ENCODE measurements at regions of chr11 and their contacts with region 1.

Region 1: GRCh38 chr11:416757-417621 is 2.2 kb upstream of the SIGIRR start:
- DNase-seq: no peak
- H3K4me3 ChIP-seq: peak overlapping the region; percentile 42 to 75 (median 65)
- H3K27ac ChIP-seq: peak overlapping the region; percentile 63 to 86
- H3K4me1 ChIP-seq: peaks cover 0 to 8% of the 10 kb centered on the region in 2 donors
- H3K27me3 ChIP-seq: peaks cover 0 to 3% of the 10 kb centered on the region in 2 donors
- CTCF ChIP-seq: no peak
- POLR2A ChIP-seq: no peak

Region 2: DNA sequence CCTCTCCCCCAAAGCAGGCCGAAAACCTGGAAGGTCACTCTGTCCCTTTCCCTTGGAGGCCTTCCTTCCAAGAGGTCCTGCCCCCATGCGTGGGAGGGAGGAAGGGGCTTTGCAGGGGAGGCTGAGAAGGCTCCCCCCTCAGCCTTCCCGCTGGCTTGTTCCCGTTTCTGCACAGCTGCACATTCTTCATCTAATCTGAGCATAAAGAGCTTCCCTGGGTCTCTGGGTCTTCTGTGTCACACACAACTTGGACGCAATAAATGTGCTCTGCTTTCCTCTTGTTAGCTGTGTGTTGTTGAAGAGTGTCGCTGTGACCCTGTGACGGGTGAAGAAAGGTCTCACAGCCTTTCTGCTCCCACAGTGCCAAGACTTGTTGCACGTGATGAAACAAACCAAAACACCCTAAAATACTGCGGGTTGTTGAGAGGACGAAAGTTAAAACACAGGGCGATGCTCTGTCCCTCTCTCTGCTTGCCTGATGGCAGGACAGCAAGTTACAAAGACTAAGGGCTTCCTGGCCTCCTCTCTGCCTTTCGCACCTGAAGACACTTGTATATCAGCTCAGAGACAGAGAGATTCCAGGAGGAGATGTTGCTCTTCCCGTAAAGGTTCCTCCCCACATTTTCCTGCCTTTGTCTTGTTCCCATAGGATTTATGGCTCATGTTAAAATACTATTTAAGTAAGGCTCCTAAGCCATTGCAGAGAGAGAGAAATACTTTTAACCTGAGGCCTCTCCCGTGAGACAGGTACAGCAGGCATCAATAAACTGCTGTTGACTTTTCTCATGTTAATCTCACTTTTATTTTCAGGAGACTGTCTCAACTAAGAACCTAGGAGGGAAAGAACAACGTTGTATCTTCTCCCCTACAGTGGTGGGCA is 81.0 kb before region 1 on chr11:
- intact Hi-C with region 1: loop called (anchors 2 kb)
- DNase-seq: peak in 1 of 2 donors; percentile 17
- H3K4me3 ChIP-seq: peak overlapping the region in 1 of 3 donors; percentile 19
- H3K27ac ChIP-seq: peak overlapping the region; percentile 76 to 79
- H3K4me1 ChIP-seq: no peaks in the 10 kb centered on the region
- H3K27me3 ChIP-seq: no peaks in the 10 kb centered on the region
- CTCF ChIP-seq: no peak
- POLR2A ChIP-seq: no peak

Region 3: GRCh38 chr11:765025-765801 is 348.2 kb after region 1 on chr11:
- intact Hi-C with region 1: no loop called
- DNase-seq: peak in 1 of 2 donors; percentile 50
- H3K4me3 ChIP-seq: no peak overlapping the region
- H3K27ac ChIP-seq: peak overlapping the region in 1 of 2 donors; percentile 19
- H3K4me1 ChIP-seq: peaks cover 0 to 4% of the 10 kb centered on the region in 2 donors
- H3K27me3 ChIP-seq: no peaks in the 10 kb centered on the region
- CTCF ChIP-seq: peak; percentile 48 to 64 (median 62)
- POLR2A ChIP-seq: no peak

Region 4: DNA sequence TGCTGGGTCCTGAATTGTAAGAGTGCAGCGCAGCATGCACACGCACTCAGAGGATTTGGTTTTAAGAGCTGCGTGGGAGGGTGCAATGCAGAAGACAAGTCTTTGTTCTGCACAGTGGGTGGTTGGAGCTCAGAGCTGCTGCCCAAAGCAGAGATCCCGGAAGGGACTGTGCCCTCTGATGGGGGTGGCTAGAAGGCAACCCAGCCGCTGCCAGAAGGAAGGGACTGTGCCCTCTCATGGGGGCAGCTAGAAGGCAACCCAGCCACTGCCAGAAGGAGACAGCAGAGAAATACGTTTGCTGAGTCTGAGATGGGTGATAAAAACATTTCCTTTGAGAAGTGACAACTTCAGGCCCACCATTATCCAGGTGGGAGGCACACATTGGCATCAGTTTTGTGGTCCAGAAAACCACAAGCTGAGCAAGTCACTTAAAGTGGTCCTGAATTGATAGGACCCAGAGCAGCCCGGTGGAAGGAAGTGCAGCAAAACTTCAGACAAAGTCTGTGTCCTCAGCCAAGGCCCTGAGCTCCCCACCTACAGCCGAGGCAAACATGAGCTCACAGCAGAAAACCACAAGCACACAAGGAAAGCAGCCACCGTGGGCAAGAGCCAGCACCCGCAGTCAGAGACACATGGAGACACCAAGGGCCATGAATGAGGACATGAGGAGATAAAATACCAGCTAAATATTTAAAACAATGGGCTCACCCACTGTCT is 1284.3 kb after region 1 on chr11:
- intact Hi-C with region 1: loop called (anchors 5 kb)
- DNase-seq: peak in 1 of 2 donors; percentile 14
- H3K4me3 ChIP-seq: no peak overlapping the region
- H3K27ac ChIP-seq: no peak overlapping the region
- H3K4me1 ChIP-seq: no peaks in the 10 kb centered on the region
- H3K27me3 ChIP-seq: no peaks in the 10 kb centered on the region
- CTCF ChIP-seq: no peak
- POLR2A ChIP-seq: no peak

Region 5: GRCh38 chr11:2151500-2152257 is 1734.7 kb after region 1 on chr11:
- intact Hi-C with region 1: loop called (anchors 5 kb)
- DNase-seq: peak; percentile 77 to 83
- H3K4me3 ChIP-seq: no peak overlapping the region
- H3K27ac ChIP-seq: no peak overlapping the region
- H3K4me1 ChIP-seq: peaks cover 0 to 3% of the 10 kb centered on the region in 2 donors
- H3K27me3 ChIP-seq: peaks cover 0 to 59% of the 10 kb centered on the region in 2 donors
- CTCF ChIP-seq: peak; percentile 89 to 98 (median 94)
- POLR2A ChIP-seq: no peak